GM12878 (cell line): ENCODE measurements at regions of chr9 and their contacts with region 1.

Region 1: DNA sequence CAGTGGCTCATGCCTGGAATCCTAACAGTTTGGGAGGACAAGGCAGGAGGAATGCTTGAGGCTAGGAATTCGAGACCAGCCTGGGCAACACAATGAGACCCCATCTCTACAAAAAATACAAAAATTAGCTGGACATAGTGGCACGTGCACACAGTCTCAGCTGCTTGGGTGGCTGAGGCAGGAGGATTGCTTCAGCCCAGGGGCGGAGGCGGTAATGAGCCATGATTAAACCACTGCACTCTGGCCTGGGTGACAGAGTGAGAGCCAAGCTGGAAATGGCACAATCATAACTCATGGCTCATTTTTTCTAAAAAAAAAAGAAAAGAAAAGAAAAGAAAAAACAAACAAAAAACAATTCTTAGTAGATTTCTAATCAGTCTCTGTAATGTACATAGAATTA is 446.2 kb downstream of the ELAVL2 start:
- DNase-seq: no peak
- ATAC-seq: no peak
- H3K4me3 ChIP-seq: no peak overlapping the region
- H3K27ac ChIP-seq: no peak overlapping the region
- H3K4me1 ChIP-seq: no peaks in the 10 kb centered on the region
- H3K27me3 ChIP-seq: no peaks in the 10 kb centered on the region
- CTCF ChIP-seq: no peak
- EP300 ChIP-seq: no peak
- POLR2A ChIP-seq: no peak
- RAD21 ChIP-seq: no peak

Region 2: DNA sequence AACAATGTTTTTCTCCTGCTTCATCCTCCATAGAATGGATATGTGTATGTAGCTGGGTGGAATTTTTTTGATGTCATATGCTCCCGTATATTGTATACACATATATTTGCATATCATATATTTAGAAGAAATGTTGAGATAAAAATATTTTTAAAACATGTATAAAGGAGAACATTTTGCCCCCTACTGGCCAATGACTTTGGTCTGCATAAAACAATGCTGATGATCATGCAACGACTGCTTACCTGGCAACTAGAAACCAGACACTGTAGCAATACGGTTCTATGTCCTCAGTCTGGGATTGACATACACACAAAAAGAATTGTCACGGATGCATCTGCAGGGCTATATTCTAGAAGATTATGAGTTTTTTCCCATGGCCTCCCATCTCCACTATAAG is 57.5 kb before region 1 on chr9:
- CTCF ChIA-PET with region 1: no interaction called
- POLR2A ChIA-PET with region 1: no interaction called
- RAD21 ChIA-PET with region 1: no interaction called
- SMC1A ChIA-PET with region 1: no interaction called
- in situ Hi-C with region 1: no loop called
- intact Hi-C with region 1: loop called (anchors 10 kb)
- DNase-seq: no peak
- ATAC-seq: no peak
- H3K4me3 ChIP-seq: no peak overlapping the region
- H3K27ac ChIP-seq: no peak overlapping the region
- H3K4me1 ChIP-seq: no peaks in the 10 kb centered on the region
- H3K27me3 ChIP-seq: no peaks in the 10 kb centered on the region
- CTCF ChIP-seq: peak in 1 of 3 experiments; percentile 3; a peak in 1 of 6 replicates
- EP300 ChIP-seq: no peak
- POLR2A ChIP-seq: no peak
- RAD21 ChIP-seq: no peak

Region 3: DNA sequence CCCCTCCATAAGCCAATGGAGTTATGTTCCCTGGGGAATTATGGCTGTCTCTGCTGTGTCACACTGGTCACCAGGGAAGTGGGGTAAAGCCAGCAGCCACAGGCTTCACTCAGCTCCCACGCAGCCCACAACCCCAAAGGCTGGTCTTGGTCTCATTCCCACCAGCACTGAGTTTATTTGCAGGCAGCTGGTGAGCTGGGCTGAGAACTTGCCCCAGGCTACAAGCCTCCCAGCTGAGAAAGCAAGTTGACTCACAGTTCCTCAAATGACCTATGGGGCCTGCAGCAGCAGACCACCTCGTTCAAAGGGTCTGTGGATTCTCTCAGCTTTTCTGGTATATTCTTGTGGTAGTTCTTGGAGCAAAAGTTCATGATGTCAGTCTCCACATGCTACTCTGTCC is 22.2 kb before region 1 on chr9:
- CTCF ChIA-PET with region 1: no interaction called
- POLR2A ChIA-PET with region 1: no interaction called
- RAD21 ChIA-PET with region 1: no interaction called
- SMC1A ChIA-PET with region 1: interaction called, 3 read pairs
- in situ Hi-C with region 1: no loop called
- intact Hi-C with region 1: loop called (anchors 1 kb)
- DNase-seq: no peak
- ATAC-seq: no peak
- H3K4me3 ChIP-seq: no peak overlapping the region
- H3K27ac ChIP-seq: no peak overlapping the region
- H3K4me1 ChIP-seq: no peaks in the 10 kb centered on the region
- H3K27me3 ChIP-seq: no peaks in the 10 kb centered on the region
- CTCF ChIP-seq: no peak
- EP300 ChIP-seq: no peak
- POLR2A ChIP-seq: no peak
- RAD21 ChIP-seq: no peak

Region 4: DNA sequence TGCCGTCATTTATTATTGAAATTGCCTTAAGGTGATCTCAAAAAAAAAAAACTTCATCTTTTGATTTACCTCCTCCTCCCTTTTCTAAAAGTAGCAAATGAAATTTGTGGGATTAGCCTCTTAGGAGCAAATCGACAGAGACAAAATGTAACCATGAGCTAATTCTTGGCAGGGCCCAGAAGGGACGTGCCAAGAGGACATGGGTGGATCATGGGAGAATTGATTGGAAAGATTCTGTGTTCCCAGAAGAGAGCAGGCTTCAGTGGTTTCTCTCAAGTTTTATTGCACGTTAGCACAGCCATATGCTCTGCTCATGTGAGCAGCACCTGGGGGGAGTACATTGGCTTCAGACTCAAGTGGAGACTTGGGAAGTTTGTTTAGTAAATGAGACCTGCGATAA is 51.6 kb after region 1 on chr9:
- CTCF ChIA-PET with region 1: no interaction called
- POLR2A ChIA-PET with region 1: no interaction called
- RAD21 ChIA-PET with region 1: no interaction called
- SMC1A ChIA-PET with region 1: no interaction called
- in situ Hi-C with region 1: no loop called
- intact Hi-C with region 1: no loop called
- DNase-seq: no peak
- ATAC-seq: no peak
- H3K4me3 ChIP-seq: no peak overlapping the region
- H3K27ac ChIP-seq: no peak overlapping the region
- H3K4me1 ChIP-seq: no peaks in the 10 kb centered on the region
- H3K27me3 ChIP-seq: no peaks in the 10 kb centered on the region
- CTCF ChIP-seq: no peak
- EP300 ChIP-seq: no peak
- POLR2A ChIP-seq: no peak
- RAD21 ChIP-seq: no peak

Region 5: DNA sequence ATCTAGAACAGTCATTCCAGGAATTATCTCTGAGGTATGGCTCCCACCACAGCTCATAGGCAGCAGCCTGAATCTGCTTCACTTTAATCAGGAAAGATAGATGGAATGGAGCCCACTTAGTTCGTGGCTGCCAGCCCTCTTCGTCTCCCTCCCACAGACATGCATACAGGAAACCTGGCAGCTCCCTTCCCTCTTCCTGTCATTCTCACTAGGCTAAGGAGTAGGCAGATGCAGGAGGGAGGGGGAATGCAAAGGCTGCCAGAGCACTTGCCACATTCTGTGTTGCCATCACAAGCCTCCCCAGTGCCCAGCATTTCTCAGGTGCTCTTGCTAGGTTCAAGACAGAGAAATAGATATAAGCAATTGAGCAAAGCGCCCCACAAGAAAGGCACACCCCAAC is 67.3 kb after region 1 on chr9:
- CTCF ChIA-PET with region 1: no interaction called
- POLR2A ChIA-PET with region 1: no interaction called
- RAD21 ChIA-PET with region 1: no interaction called
- SMC1A ChIA-PET with region 1: no interaction called
- in situ Hi-C with region 1: no loop called
- intact Hi-C with region 1: no loop called
- DNase-seq: no peak
- ATAC-seq: no peak
- H3K4me3 ChIP-seq: no peak overlapping the region
- H3K27ac ChIP-seq: no peak overlapping the region
- H3K4me1 ChIP-seq: no peaks in the 10 kb centered on the region
- H3K27me3 ChIP-seq: no peaks in the 10 kb centered on the region
- CTCF ChIP-seq: no peak
- EP300 ChIP-seq: no peak
- POLR2A ChIP-seq: no peak
- RAD21 ChIP-seq: no peak